GM12878 (cell line): ENCODE measurements at regions of chr6 and their contacts with region 1.

Region 1: DNA sequence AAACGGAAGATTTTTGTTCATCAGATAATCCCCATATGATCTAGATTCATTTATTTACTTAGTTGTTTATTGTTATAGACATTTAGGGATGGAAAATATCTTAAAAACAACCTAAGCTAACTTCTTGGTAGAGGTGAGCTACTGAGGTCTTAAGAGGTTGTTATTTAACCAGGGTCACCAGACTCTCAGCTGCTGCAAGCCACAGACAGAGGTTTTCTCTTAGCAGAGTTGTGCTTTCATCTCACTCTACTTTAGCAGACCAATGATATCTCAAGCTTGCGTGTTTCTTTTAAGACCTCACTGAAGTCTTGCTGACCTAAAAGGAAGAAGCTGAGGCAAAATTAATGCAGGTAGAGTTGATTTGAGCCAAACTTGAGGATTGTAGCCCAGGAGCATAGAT is 43.6 kb downstream of the NCOA7 start:
- DNase-seq: peak; percentile 36
- ATAC-seq: peak; percentile 82
- H3K4me3 ChIP-seq: no peak overlapping the region
- H3K27ac ChIP-seq: no peak overlapping the region
- H3K4me1 ChIP-seq: peaks cover 18% of the 10 kb centered on the region
- H3K27me3 ChIP-seq: no peaks in the 10 kb centered on the region
- CTCF ChIP-seq: no peak
- EP300 ChIP-seq: 0 out of 4 replicates have a peak, but pooled peaks of 1 of the 2 experiments have one; percentile 18
- POLR2A ChIP-seq: no peak
- RAD21 ChIP-seq: no peak

Region 2: GRCh38 chr6:125798734-125799508 is 35.4 kb before region 1 on chr6:
- CTCF ChIA-PET with region 1: interaction called, 24 read pairs
- POLR2A ChIA-PET with region 1: interaction called, 11 read pairs
- RAD21 ChIA-PET with region 1: interaction called, 135 read pairs
- SMC1A ChIA-PET with region 1: interaction called, 161 read pairs
- in situ Hi-C with region 1: no loop called
- intact Hi-C with region 1: loop called (anchors 5 kb)
- DNase-seq: peak; percentile 72
- ATAC-seq: peak; percentile 81
- H3K4me3 ChIP-seq: no peak overlapping the region
- H3K27ac ChIP-seq: peak overlapping the region; percentile 96
- H3K4me1 ChIP-seq: peaks cover 51% of the 10 kb centered on the region
- H3K27me3 ChIP-seq: no peaks in the 10 kb centered on the region
- CTCF ChIP-seq: no peak
- EP300 ChIP-seq: peak; percentile 83 to 99
- POLR2A ChIP-seq: no peak
- RAD21 ChIP-seq: no peak

Region 3: DNA sequence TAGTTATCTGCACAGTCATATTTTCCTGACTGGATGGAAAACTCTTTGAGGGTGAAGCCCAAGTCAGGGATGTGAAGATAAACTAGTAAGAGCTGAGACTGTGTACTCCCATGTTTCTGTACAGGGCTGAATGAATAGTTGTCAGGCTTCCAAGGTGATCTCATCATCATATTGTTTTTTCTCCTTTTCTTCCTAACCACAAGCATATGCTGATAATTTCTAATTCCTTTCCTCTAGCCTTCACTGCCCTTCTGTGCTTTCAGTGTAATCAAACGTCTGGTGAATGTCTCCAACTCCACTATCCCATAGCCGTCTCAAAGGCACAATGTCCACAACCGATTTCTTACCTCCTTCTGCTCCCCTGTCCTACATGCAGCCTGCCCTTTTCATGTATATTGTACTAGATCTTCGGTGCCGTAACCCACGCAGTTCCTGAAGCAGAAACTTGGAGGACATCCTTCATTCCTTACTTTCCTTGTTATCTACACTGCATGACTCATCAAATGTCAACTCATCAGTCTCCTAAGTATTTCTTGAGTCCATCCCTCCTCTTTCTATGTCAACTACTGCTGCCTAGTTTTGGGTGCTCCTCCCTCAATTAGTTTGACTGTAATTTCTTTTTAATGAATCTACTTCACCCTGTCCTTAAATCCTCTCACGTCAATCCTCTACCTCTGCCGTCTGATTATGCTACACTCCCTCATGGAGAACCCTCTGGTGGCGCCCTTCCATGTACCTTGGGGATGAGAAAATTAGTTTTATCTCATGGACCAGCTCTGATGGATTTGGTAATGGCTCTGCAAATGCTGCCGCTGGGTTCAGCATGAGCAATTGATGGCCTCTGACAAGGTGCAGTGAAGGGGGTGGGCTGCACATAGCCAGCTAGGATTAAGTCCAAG is 21.7 kb before region 1 on chr6:
- CTCF ChIA-PET with region 1: interaction called, 13 read pairs
- POLR2A ChIA-PET with region 1: interaction called, 7 read pairs
- RAD21 ChIA-PET with region 1: interaction called, 22 read pairs
- SMC1A ChIA-PET with region 1: interaction called, 33 read pairs
- in situ Hi-C with region 1: no loop called
- intact Hi-C with region 1: no loop called
- DNase-seq: no peak
- ATAC-seq: no peak
- H3K4me3 ChIP-seq: no peak overlapping the region
- H3K27ac ChIP-seq: no peak overlapping the region
- H3K4me1 ChIP-seq: peaks cover 68% of the 10 kb centered on the region
- H3K27me3 ChIP-seq: no peaks in the 10 kb centered on the region
- CTCF ChIP-seq: no peak
- EP300 ChIP-seq: no peak
- POLR2A ChIP-seq: no peak
- RAD21 ChIP-seq: no peak

Region 4: DNA sequence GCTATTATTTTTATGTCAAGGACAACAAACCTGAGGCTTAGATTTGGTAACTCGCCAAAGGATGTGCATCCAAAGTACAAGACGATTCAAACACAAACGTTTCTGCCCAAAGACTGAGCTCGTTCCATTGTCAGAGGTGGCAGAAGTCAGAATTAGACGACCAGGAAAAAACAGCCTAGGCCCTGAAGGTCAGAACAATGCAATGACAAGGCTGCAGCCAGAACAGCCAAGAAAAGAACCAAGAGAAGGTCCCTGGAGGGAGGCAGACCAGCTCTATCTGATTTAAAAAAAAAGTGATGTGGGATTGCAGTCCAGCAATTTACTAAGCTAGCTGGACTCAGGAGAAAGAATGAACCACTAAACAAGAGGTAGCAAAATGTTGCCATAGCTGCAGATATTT is 10.6 kb after region 1 on chr6:
- CTCF ChIA-PET with region 1: interaction called, 10 read pairs
- POLR2A ChIA-PET with region 1: interaction called, 4 read pairs
- RAD21 ChIA-PET with region 1: interaction called, 8 read pairs
- SMC1A ChIA-PET with region 1: interaction called, 15 read pairs
- in situ Hi-C with region 1: no loop called
- intact Hi-C with region 1: no loop called
- DNase-seq: no peak
- ATAC-seq: no peak
- H3K4me3 ChIP-seq: no peak overlapping the region
- H3K27ac ChIP-seq: no peak overlapping the region
- H3K4me1 ChIP-seq: no peaks in the 10 kb centered on the region
- H3K27me3 ChIP-seq: no peaks in the 10 kb centered on the region
- CTCF ChIP-seq: no peak
- EP300 ChIP-seq: no peak
- POLR2A ChIP-seq: no peak
- RAD21 ChIP-seq: no peak

Region 5: GRCh38 chr6:125888989-125889656 is 54.8 kb after region 1 on chr6:
- CTCF ChIA-PET with region 1: interaction called, 6 read pairs
- POLR2A ChIA-PET with region 1: no interaction called
- RAD21 ChIA-PET with region 1: interaction called, 3 read pairs
- SMC1A ChIA-PET with region 1: interaction called, 13 read pairs
- in situ Hi-C with region 1: no loop called
- intact Hi-C with region 1: no loop called
- DNase-seq: no peak
- ATAC-seq: peak; percentile 66
- H3K4me3 ChIP-seq: no peak overlapping the region
- H3K27ac ChIP-seq: no peak overlapping the region
- H3K4me1 ChIP-seq: no peaks in the 10 kb centered on the region
- H3K27me3 ChIP-seq: no peaks in the 10 kb centered on the region
- CTCF ChIP-seq: peak; percentile 46 to 52 (median 50)
- EP300 ChIP-seq: no peak
- POLR2A ChIP-seq: no peak
- RAD21 ChIP-seq: peak; percentile 51